Mammary epithelial cell (primary cell): ENCODE measurements at regions of chr14 and their contacts with region 1.

Region 1: GRCh38 chr14:50860478-50861086 is 11.3 kb upstream of the ABHD12B start:
- DNase-seq: peak; percentile 56
- H3K4me3 ChIP-seq: peak overlapping the region; percentile 41 to 58 (median 54)
- H3K27ac ChIP-seq: peak overlapping the region; percentile 52
- H3K4me1 ChIP-seq: peaks cover 6% of the 10 kb centered on the region
- H3K27me3 ChIP-seq: no peaks in the 10 kb centered on the region
- CTCF ChIP-seq: peak; percentile 57 to 72

Region 2: GRCh38 chr14:50354527-50354926 is 506.1 kb before region 1 on chr14:
- CTCF ChIA-PET with region 1: no interaction called
- dilution Hi-C with region 1: no loop called
- in situ Hi-C with region 1: no loop called
- intact Hi-C with region 1: no loop called
- DNase-seq: no peak
- H3K4me3 ChIP-seq: no peak overlapping the region
- H3K27ac ChIP-seq: no peak overlapping the region
- H3K4me1 ChIP-seq: no peaks in the 10 kb centered on the region
- H3K27me3 ChIP-seq: no peaks in the 10 kb centered on the region
- CTCF ChIP-seq: no peak

Region 3: GRCh38 chr14:50542941-50543418 is 317.6 kb before region 1 on chr14:
- CTCF ChIA-PET with region 1: no interaction called
- dilution Hi-C with region 1: no loop called
- in situ Hi-C with region 1: no loop called
- intact Hi-C with region 1: loop called (anchors 2 kb)
- DNase-seq: peak; percentile 60
- H3K4me3 ChIP-seq: no peak overlapping the region
- H3K27ac ChIP-seq: no peak overlapping the region
- H3K4me1 ChIP-seq: peaks cover 7% of the 10 kb centered on the region
- H3K27me3 ChIP-seq: no peaks in the 10 kb centered on the region
- CTCF ChIP-seq: peak; percentile 54 to 63

Region 4: GRCh38 chr14:50619556-50620141 is 240.9 kb before region 1 on chr14:
- CTCF ChIA-PET with region 1: interaction called, 17 read pairs
- dilution Hi-C with region 1: no loop called
- in situ Hi-C with region 1: no loop called
- intact Hi-C with region 1: loop called (anchors 5 kb)
- DNase-seq: peak; percentile 32
- H3K4me3 ChIP-seq: no peak overlapping the region
- H3K27ac ChIP-seq: no peak overlapping the region
- H3K4me1 ChIP-seq: peaks cover 9% of the 10 kb centered on the region
- H3K27me3 ChIP-seq: no peaks in the 10 kb centered on the region
- CTCF ChIP-seq: peak; percentile 71 to 75

Region 5: DNA sequence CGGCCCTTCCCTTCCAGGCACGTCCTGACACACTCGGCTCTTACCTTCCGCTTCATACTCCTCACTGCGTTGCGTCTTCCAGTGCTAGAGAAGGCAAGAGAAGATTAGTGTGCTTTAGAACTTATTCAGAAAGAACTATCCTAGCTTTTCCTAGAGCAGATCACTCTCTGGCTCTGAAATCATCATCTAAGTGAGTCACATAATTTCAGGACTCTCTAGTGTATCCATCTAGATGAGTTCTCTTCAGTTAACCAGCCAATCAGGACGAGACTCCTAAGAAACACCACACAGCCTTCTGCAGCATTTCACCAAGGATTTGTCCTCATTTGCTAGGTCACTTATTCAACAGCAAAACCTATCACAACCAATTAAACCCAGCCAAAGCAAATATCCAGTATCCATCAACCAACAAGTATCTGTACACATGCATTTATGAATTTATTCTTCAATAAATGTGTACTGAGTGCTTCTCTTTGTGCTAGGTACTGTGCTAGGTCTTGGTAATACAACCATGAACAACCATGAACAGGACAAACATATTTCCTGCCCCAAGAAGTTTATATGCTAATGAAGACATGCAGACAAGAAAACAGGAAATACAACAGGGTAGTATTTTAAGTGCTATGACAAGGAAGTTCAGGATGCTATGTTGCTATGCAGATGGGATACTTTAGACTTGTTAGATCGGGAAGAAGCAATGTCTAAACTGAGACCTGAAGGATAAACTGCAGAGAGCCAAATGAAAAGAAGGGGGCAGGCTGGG is 81.7 kb before region 1 on chr14:
- CTCF ChIA-PET with region 1: interaction called, 14 read pairs
- dilution Hi-C with region 1: no loop called
- in situ Hi-C with region 1: loop called in 1 of 2 experiments (anchors 5 kb)
- intact Hi-C with region 1: loop called (anchors 1 kb)
- DNase-seq: peak; percentile 18
- H3K4me3 ChIP-seq: no peak overlapping the region
- H3K27ac ChIP-seq: no peak overlapping the region
- H3K4me1 ChIP-seq: peaks cover 28% of the 10 kb centered on the region
- H3K27me3 ChIP-seq: no peaks in the 10 kb centered on the region
- CTCF ChIP-seq: no peak

Region 6: GRCh38 chr14:50830932-50831725 is 29.5 kb before region 1 on chr14 and contains the start of gene NIN:
- CTCF ChIA-PET with region 1: interaction called, 3 read pairs
- dilution Hi-C with region 1: no loop called
- in situ Hi-C with region 1: no loop called
- intact Hi-C with region 1: loop called (anchors 1 kb)
- DNase-seq: peak; percentile 82
- H3K4me3 ChIP-seq: peak within 1 kb of the TSS; percentile 78 to 83 (median 83)
- H3K27ac ChIP-seq: peak within 1 kb of the TSS; percentile 21
- H3K4me1 ChIP-seq: peaks cover 22% of the 10 kb centered on the region
- H3K27me3 ChIP-seq: no peaks in the 10 kb centered on the region
- CTCF ChIP-seq: no peak
- total RNA-seq, gene NIN: 20.7 to 40.2 TPM

Region 7: GRCh38 chr14:50954811-50955372 is 94.3 kb after region 1 on chr14:
- CTCF ChIA-PET with region 1: interaction called, 3 read pairs
- dilution Hi-C with region 1: no loop called
- in situ Hi-C with region 1: no loop called
- intact Hi-C with region 1: loop called (anchors 5 kb)
- DNase-seq: peak; percentile 66
- H3K4me3 ChIP-seq: peak overlapping the region in 2 of 3 experiments; percentile 20 to 33
- H3K27ac ChIP-seq: peak overlapping the region; percentile 88
- H3K4me1 ChIP-seq: peaks cover 14% of the 10 kb centered on the region
- H3K27me3 ChIP-seq: no peaks in the 10 kb centered on the region
- CTCF ChIP-seq: peak; percentile 53 to 74

Region 8: DNA sequence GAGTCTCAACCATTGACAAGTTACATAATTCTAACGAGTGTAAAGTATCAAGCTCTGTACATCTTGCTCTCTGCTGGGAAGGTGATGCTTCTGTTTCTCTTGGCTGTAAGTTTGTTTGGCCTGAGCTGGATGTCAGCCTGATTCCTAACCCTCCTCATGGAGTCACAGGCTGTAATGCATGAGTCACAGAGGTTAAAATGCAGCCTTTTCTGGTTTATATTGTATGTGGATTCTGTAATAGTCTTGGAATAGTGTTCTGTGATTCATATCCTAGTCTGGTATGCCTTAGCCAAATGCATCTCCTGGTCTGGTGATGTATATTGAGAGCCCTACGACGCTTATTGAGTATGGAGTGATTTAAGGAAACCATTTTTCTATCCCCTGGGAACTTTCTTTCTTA is 686.7 kb after region 1 on chr14:
- CTCF ChIA-PET with region 1: no interaction called
- dilution Hi-C with region 1: no loop called
- in situ Hi-C with region 1: no loop called
- intact Hi-C with region 1: no loop called
- DNase-seq: peak; percentile 99
- H3K4me3 ChIP-seq: peak overlapping the region in 1 of 3 experiments; percentile 8
- H3K27ac ChIP-seq: peak overlapping the region; percentile 96
- H3K4me1 ChIP-seq: peaks cover 60% of the 10 kb centered on the region
- H3K27me3 ChIP-seq: no peaks in the 10 kb centered on the region
- CTCF ChIP-seq: no peak